A673 (cell line): ENCODE measurements at regions of chr6 and their contacts with region 1.

Region 1: DNA sequence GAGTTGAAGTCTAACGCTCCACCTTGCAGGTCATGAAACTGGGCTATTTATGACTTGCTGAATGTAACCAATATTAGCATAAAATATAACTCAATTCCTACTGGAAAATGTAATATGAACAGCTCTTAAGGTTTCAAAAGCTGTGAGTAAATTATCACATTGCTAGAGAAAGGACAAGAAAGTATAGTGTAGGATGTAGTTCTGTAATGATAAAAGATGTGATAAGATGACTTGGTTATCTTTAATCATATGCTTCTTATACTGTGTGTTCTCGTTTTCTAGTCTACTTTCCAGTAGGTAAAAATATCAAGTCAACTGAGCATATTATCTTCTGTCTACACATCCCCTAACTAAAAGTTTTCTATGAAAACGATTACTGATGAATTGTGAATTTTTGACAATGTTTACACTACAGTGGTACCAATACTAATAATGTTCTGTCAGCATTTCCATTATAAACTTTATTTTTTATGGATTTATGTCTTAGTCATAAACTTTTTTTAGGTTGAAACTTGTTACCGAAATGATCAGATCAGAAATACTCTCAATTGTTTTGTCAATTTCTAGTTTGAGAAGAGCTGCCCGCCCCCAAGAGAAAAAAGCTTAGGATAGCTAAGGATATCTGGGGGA is 14.6 kb downstream of the MED23 start:
- DNase-seq: no peak
- H3K4me3 ChIP-seq: no peak overlapping the region
- H3K27ac ChIP-seq: no peak overlapping the region
- H3K4me1 ChIP-seq: no peaks in the 10 kb centered on the region
- H3K27me3 ChIP-seq: no peaks in the 10 kb centered on the region
- CTCF ChIP-seq: no peak

Region 2: DNA sequence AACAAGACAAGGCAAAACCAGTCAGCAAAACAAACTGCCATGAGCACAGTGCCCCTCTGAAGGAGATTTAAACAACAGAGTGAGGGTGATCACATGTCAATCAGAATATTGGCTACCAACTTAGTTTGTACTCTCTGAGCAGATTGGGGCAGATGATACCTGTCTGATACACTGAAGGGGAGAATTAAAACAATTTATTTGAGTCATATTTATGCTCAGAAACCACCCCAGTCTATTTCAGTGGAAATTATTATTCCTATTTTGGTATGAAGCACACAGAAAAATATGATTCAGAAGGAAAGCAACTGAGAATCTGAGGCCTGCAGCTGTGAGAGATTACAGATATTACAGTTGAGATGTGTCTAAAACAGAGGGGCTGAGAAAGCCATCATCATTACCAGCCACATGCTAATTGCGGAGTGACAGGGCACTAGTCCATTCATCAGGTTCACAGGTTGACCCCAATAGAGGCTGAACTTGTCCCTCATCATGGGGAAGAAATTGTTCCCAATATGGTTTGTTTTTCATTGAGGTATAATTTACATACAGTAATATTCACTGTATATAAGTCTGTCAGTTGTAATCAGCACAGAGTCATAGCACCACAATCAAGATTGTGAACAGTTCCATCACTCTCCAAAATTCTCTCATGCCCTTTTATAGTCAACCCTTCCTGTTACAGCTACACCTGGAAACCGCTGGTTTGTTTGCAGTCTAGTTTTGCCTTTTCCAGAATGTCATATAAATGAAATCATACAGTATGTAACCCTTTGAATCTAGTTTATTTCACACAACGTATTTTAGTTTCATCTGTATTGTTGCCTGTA is 343.6 kb before region 1 on chr6:
- CTCF ChIA-PET with region 1: no interaction called
- POLR2A ChIA-PET with region 1: interaction called, 29 read pairs
- intact Hi-C with region 1: no loop called
- DNase-seq: no peak
- H3K4me3 ChIP-seq: no peak overlapping the region
- H3K27ac ChIP-seq: no peak overlapping the region
- H3K4me1 ChIP-seq: peaks cover 20% of the 10 kb centered on the region
- H3K27me3 ChIP-seq: no peaks in the 10 kb centered on the region
- CTCF ChIP-seq: no peak